H1 (cell line): ENCODE measurements at regions of chr4 and their contacts with region 1.

Region 1: GRCh38 chr4:8568068-8568680 is 12.0 kb upstream of the GPR78 start:
- DNase-seq: peak in 1 of 2 experiments; percentile 63
- H3K4me3 ChIP-seq: peak overlapping the region in 1 of 4 experiments; percentile 35; a peak in 1 of 8 replicates
- H3K27ac ChIP-seq: peak overlapping the region; percentile 77; the same call in 1 of the 2 replicates
- H3K4me1 ChIP-seq: peaks cover 1 to 17% (median 8%) of the 10 kb centered on the region in 4 experiments; a peak in 5 of 7 replicates
- H3K27me3 ChIP-seq: no peaks in the 10 kb centered on the region
- CTCF ChIP-seq: no peak
- EP300 ChIP-seq: 0 out of 3 replicates have a peak, but pooled peaks of 1 of the 2 experiments have one; percentile 27
- POLR2A ChIP-seq: peak in 1 of 2 experiments; percentile 56; a peak in 2 of 3 replicates
- RAD21 ChIP-seq: no peak

Region 2: DNA sequence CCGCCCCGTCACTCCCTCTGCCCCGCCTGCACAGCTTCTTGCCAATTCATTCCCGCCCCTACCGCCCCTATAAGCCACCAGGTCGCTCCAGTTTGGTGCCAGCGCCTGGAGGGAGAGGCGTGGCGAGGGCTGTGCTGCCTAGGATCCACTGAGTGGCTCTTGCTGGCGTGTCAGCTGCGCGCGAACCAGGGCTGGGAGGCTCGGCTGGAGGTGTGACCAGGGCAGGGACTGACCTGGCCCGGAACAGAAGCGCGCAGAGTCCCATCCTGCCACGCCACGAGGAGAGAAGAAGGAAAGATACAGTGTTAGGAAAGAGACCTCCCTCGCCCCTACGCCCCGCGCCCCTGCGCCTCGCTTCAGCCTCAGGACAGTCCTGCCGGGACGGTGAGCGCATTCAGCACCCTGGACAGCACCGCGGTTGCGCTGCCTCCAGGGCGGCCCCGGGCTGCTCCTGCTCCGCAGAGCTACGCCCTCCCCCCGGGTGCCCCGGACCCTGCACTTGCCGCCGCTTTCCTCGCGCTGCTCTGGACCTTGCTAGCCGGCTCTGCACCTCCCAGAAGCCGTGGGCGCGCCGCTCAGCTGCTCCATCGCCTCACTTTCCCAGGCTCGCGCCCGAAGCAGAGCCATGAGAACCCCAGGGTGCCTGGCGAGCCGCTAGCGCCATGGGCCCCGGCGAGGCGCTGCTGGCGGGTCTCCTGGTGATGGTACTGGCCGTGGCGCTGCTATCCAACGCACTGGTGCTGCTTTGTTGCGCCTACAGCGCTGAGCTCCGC is 12.3 kb after region 1 on chr4 and contains the start of gene GPR78:
- CTCF ChIA-PET with region 1: interaction called, 11 read pairs
- POLR2A ChIA-PET with region 1: interaction called, 7 read pairs
- DNase-seq: peak; percentile 73 to 99
- H3K4me3 ChIP-seq: peak within 1 kb of the TSS in 3 of 4 experiments; percentile 29 to 56 (median 40); a peak in 7 of 8 replicates
- H3K27ac ChIP-seq: no peak within 1 kb of the TSS
- H3K4me1 ChIP-seq: peaks cover 0 to 24% (median 18%) of the 10 kb centered on the region in 4 experiments; a peak in 6 of 7 replicates
- H3K27me3 ChIP-seq: peaks cover 3 to 16% (median 15%) of the 10 kb centered on the region in 4 experiments
- CTCF ChIP-seq: no peak
- EP300 ChIP-seq: no peak
- POLR2A ChIP-seq: 0 out of 3 replicates have a peak, but pooled peaks of 1 of the 2 experiments have one; percentile 34
- RAD21 ChIP-seq: no peak
- total RNA-seq, gene GPR78: 3.0 and 3.3 TPM in 2 replicates

Region 3: GRCh38 chr4:8586671-8587455 is 18.7 kb after region 1 on chr4:
- CTCF ChIA-PET with region 1: interaction called, 13 read pairs
- POLR2A ChIA-PET with region 1: interaction called, 4 read pairs
- DNase-seq: no peak
- H3K4me3 ChIP-seq: no peak overlapping the region
- H3K27ac ChIP-seq: no peak overlapping the region
- H3K4me1 ChIP-seq: peaks cover 0 to 13% (median 9%) of the 10 kb centered on the region in 4 experiments; a peak in 5 of 7 replicates
- H3K27me3 ChIP-seq: peaks cover 0 to 8% (median 5%) of the 10 kb centered on the region in 4 experiments; a peak in 5 of 7 replicates
- CTCF ChIP-seq: peak in 2 of 3 experiments; percentile 5; a peak in 1 of 4 replicates
- EP300 ChIP-seq: no peak
- POLR2A ChIP-seq: no peak
- RAD21 ChIP-seq: peak in 1 of 2 experiments; percentile 26; a peak in 2 of 4 replicates

Region 4: GRCh38 chr4:8832113-8832915 is 264.1 kb after region 1 on chr4:
- CTCF ChIA-PET with region 1: no interaction called
- POLR2A ChIA-PET with region 1: no interaction called
- DNase-seq: peak in 1 of 2 experiments; percentile 44
- H3K4me3 ChIP-seq: no peak overlapping the region
- H3K27ac ChIP-seq: no peak overlapping the region
- H3K4me1 ChIP-seq: peaks cover 0 to 6% (median 3%) of the 10 kb centered on the region in 4 experiments; a peak in 4 of 7 replicates
- H3K27me3 ChIP-seq: no peaks in the 10 kb centered on the region
- CTCF ChIP-seq: no peak
- EP300 ChIP-seq: no peak
- POLR2A ChIP-seq: no peak
- RAD21 ChIP-seq: no peak